ENCODE measurements at regions of chr2 and their contacts with region 1.

Region 1: DNA sequence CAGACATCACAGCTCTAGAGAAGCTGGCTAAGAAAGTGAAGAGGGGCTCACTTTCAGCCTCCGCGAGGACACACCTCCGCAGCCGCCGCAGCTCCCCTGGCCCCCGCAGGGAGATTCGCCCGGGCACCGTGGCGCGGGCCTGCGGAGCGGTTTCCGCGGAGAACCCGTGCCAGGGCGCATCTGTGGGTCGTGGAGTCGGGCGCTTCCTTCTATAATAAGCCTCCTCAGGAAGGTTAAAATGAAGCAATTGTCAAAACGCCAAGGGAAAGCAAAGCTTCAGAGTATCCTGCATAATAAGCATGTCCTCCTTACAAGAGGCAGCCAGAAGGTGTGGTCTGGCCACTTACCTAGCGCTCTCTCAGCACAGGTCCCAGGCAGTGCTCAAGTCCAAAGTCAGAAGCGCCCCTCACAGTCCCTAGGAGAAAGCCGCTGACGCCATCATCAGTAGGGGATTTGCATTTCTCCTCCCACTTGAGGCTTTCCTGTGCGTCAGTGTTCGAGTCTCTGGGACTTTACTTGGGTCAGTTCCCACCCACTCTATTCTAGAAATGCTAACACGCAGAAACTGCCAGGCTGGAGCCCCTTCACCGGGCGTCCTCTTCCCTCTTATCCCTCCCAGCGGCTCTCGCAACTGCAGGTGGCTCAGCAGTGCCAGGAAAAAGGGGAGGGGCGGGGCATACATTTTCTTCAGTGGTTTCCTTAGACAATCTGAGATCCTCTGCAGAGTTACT is at the start of gene STAT4:
- DNase-seq: peak; percentile 55 to 92 (median 84)
- ATAC-seq: peak; percentile 91
- H3K4me3 ChIP-seq: peak within 1 kb of the TSS; percentile 96
- H3K4me3 Mint-ChIP-seq: peak within 1 kb of the TSS; percentile 87 to 99 (median 95)
- H3K27ac ChIP-seq: peak within 1 kb of the TSS; percentile 98
- H3K27ac Mint-ChIP-seq: peak within 1 kb of the TSS; percentile 89 to 99 (median 95)
- H3K4me1 ChIP-seq: peaks cover 33 to 57% of the 10 kb centered on the region in 2 donors
- H3K4me1 Mint-ChIP-seq: peaks cover 33 to 70% (median 55%) of the 10 kb centered on the region in 7 donors
- H3K27me3 ChIP-seq: no peaks in the 10 kb centered on the region
- H3K27me3 Mint-ChIP-seq: no peaks in the 10 kb centered on the region
- total RNA-seq, gene STAT4: 106 to 132 (median 122) TPM

Region 2: DNA sequence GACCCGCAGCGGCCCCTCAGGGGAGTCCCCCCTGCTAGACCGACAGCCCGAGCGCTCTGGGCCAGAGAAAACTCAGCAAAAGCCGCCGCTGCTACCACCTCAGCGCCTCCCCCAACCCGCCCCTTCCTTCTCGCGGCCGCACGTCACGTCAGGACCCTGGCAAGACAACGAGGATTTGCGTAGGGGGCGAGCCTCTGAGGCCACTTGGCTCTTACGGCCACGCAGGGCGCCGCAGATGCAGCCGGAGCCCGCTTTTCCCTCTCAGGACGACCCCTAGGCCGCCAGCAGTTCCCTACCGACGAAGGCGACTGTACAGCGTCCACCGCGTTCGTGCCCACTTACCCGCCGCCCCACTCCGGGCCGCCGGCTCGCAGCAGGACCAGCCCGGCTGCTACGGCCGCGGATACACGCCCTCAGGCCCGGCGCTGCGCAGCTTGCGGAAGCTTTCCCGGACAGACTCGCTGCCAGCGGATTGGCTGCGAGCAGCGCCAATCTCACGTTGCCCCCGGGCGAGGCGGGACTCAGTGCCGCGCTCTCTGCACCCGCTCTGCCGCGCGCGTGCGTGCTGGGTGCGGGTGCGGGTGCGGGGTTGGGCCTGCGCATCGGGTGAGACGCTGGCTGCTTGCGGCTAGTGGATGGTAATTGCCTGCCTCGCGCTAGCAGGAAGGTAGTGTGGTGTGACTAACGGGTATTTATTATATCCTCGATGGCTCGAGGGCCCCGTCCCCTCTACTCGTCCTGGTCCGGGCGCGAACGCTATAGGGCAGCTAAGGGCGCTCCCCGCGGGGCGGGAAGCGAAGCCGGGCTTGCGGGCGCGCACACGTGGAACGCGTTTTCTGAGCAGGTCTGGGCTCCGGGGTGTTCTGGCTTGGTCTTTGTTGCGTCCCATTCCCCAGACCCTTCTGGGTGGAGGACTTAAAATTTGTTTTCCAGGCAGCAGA is 1366.6 kb before region 1 on chr2 and contains the starts of genes ORMDL1 and PMS1:
- CTCF ChIA-PET with region 1: no interaction called
- POLR2A ChIA-PET with region 1: no interaction called
- intact Hi-C with region 1: loop called in 1 of 2 experiments (anchors 10 kb)
- DNase-seq: peak; percentile 90 to 96 (median 94)
- ATAC-seq: peak; percentile 95
- H3K4me3 ChIP-seq: peak within 1 kb of the TSS; percentile 76
- H3K4me3 Mint-ChIP-seq: peak within 1 kb of the TSS; percentile 86 to 97 (median 94)
- H3K27ac ChIP-seq: peak within 1 kb of the TSS; percentile 92
- H3K27ac Mint-ChIP-seq: peak within 1 kb of the TSS; percentile 89 to 97 (median 95)
- H3K4me1 ChIP-seq: peaks cover 21 to 24% of the 10 kb centered on the region in 2 donors
- H3K4me1 Mint-ChIP-seq: peaks cover 26 to 72% (median 57%) of the 10 kb centered on the region in 7 donors
- H3K27me3 ChIP-seq: no peaks in the 10 kb centered on the region
- H3K27me3 Mint-ChIP-seq: no peaks in the 10 kb centered on the region
- total RNA-seq, gene ORMDL1: 80.1 to 208 (median 142) TPM
- total RNA-seq, gene PMS1: 18.2 to 30.1 (median 22.5) TPM

Region 3: DNA sequence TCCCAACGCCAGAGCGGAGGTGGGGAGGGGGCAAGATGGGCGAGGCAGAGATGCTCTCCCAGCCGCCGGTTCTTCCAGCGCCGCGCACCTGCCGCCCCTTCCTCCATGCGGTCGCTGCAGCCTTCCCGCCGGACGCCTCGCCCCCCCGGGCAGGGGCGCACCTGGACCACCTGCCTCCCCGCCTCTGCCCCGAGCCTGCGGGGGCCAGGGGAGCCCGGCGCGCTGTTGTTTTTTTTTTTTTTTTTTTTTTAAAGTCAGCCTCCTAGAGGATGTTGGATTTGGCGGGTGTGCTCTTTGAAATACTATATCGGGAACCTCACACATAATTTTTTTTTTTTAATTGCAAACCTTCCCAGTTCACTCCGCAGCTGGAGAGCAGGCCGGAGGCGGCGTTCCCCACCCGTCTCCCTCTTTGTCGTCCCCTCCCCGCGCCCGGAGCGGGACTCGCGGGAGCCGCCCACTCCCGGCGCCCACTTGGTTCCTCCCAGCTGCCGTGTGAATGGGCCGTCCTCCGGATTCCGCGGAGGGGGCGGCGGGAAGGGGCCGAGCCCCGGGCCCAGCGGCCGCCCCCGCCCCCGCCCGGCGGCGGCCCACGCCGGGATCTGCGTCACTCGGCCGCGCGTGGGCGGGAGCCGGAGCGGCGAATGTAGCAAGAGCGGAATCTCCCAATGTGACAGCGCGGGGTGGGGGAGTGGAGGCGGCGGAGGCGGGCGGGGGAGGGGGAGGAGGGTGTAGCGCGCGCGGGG is 502.3 kb before region 1 on chr2:
- CTCF ChIA-PET with region 1: no interaction called
- POLR2A ChIA-PET with region 1: no interaction called
- intact Hi-C with region 1: loop called (anchors 2 to 10 kb)
- DNase-seq: peak; percentile 83 to 93 (median 89)
- ATAC-seq: peak; percentile 91
- H3K4me3 ChIP-seq: peak overlapping the region; percentile 62
- H3K4me3 Mint-ChIP-seq: peak overlapping the region; percentile 76 to 92 (median 88)
- H3K27ac ChIP-seq: peak overlapping the region; percentile 92
- H3K27ac Mint-ChIP-seq: peak overlapping the region; percentile 15 to 98 (median 90)
- H3K4me1 ChIP-seq: peaks cover 10 to 16% of the 10 kb centered on the region in 2 donors
- H3K4me1 Mint-ChIP-seq: peaks cover 10 to 54% (median 47%) of the 10 kb centered on the region in 7 donors
- H3K27me3 ChIP-seq: no peaks in the 10 kb centered on the region
- H3K27me3 Mint-ChIP-seq: no peaks in the 10 kb centered on the region

Region 4: DNA sequence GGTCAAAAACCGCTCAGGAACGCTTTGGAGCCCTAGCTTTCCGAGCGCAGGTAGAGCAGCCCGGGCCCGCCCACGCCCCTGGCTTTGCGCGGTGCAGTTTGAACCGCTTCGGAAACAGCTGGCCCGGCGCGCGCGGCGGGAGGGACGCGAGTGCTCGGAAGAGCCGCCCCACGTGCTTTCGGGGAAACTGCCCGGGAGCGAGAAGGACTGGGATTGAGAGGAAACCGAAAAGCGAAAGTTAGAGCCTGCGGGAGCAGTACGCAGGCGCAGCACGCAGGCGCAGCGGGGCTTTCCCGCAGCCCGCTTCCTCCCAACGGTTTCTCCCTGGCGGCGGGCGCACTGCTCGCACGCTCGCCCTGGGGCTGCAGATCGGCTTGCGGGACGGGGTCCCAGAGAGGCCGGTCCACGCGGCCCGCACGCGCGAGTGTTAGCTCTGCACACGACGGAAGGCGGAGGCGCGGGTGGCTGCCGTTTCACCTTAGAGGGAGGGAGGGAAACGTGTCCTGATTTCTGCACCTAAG is 130.5 kb before region 1 on chr2:
- CTCF ChIA-PET with region 1: no interaction called
- POLR2A ChIA-PET with region 1: interaction called, 5 read pairs
- intact Hi-C with region 1: loop called in 1 of 2 experiments (anchors 2 kb)
- DNase-seq: peak; percentile 89 to 99 (median 94)
- ATAC-seq: peak; percentile 88
- H3K4me3 ChIP-seq: peak overlapping the region; percentile 78
- H3K4me3 Mint-ChIP-seq: no peak overlapping the region
- H3K27ac ChIP-seq: peak overlapping the region; percentile 82
- H3K27ac Mint-ChIP-seq: no peak overlapping the region
- H3K4me1 ChIP-seq: peaks cover 44 to 48% of the 10 kb centered on the region in 2 donors
- H3K4me1 Mint-ChIP-seq: peaks cover 11 to 46% (median 32%) of the 10 kb centered on the region in 7 donors
- H3K27me3 ChIP-seq: no peaks in the 10 kb centered on the region
- H3K27me3 Mint-ChIP-seq: peaks cover 0 to 2% (median 0%) of the 10 kb centered on the region in 5 donors

Region 5: GRCh38 chr2:191059308-191059707 is 91.5 kb before region 1 on chr2:
- CTCF ChIA-PET with region 1: interaction called, 488 read pairs
- POLR2A ChIA-PET with region 1: interaction called, 92 read pairs
- intact Hi-C with region 1: loop called (anchors 1 kb)
- DNase-seq: no peak
- ATAC-seq: no peak
- H3K4me3 ChIP-seq: no peak overlapping the region
- H3K4me3 Mint-ChIP-seq: peak overlapping the region in 3 of 10 donors; percentile 0 to 24 (median 14)
- H3K27ac ChIP-seq: no peak overlapping the region
- H3K27ac Mint-ChIP-seq: peak overlapping the region in 8 of 9 donors; percentile 11 to 96 (median 78)
- H3K4me1 ChIP-seq: peaks cover 52 to 55% of the 10 kb centered on the region in 2 donors
- H3K4me1 Mint-ChIP-seq: peaks cover 36 to 79% (median 71%) of the 10 kb centered on the region in 7 donors
- H3K27me3 ChIP-seq: no peaks in the 10 kb centered on the region
- H3K27me3 Mint-ChIP-seq: no peaks in the 10 kb centered on the region

Region 6: GRCh38 chr2:191128172-191128910 is 22.4 kb before region 1 on chr2:
- CTCF ChIA-PET with region 1: interaction called, 4 read pairs
- POLR2A ChIA-PET with region 1: interaction called, 15 read pairs
- intact Hi-C with region 1: loop called (anchors 1 to 2 kb)
- DNase-seq: no peak
- ATAC-seq: peak; percentile 79
- H3K4me3 ChIP-seq: no peak overlapping the region
- H3K4me3 Mint-ChIP-seq: peak overlapping the region in 8 of 10 donors; percentile 7 to 58 (median 44)
- H3K27ac ChIP-seq: peak overlapping the region; percentile 58
- H3K27ac Mint-ChIP-seq: peak overlapping the region; percentile 18 to 86 (median 76)
- H3K4me1 ChIP-seq: peaks cover 12 to 35% of the 10 kb centered on the region in 2 donors
- H3K4me1 Mint-ChIP-seq: peaks cover 29 to 79% (median 65%) of the 10 kb centered on the region in 7 donors
- H3K27me3 ChIP-seq: no peaks in the 10 kb centered on the region
- H3K27me3 Mint-ChIP-seq: no peaks in the 10 kb centered on the region

Region 7: GRCh38 chr2:191617575-191617974 is 466.8 kb after region 1 on chr2:
- CTCF ChIA-PET with region 1: interaction called, 3 read pairs
- POLR2A ChIA-PET with region 1: no interaction called
- intact Hi-C with region 1: loop called in 1 of 2 experiments (anchors 5 kb)
- DNase-seq: peak in 8 of 9 donors; percentile 47 to 89 (median 84)
- ATAC-seq: peak; percentile 92
- H3K4me3 ChIP-seq: peak overlapping the region; percentile 11
- H3K4me3 Mint-ChIP-seq: peak overlapping the region; percentile 0 to 71 (median 40)
- H3K27ac ChIP-seq: peak overlapping the region; percentile 84
- H3K27ac Mint-ChIP-seq: peak overlapping the region; percentile 80 to 98 (median 89)
- H3K4me1 ChIP-seq: peaks cover 21 to 22% of the 10 kb centered on the region in 2 donors
- H3K4me1 Mint-ChIP-seq: peaks cover 31 to 59% (median 51%) of the 10 kb centered on the region in 7 donors
- H3K27me3 ChIP-seq: no peaks in the 10 kb centered on the region
- H3K27me3 Mint-ChIP-seq: no peaks in the 10 kb centered on the region

Measured in naive thymus-derived CD4-positive, alpha-beta T cell (primary cell).